Endothelial cell of umbilical vein (primary cell): ENCODE measurements at regions of chr3 and their contacts with region 1.

Region 1: GRCh38 chr3:158297940-158298339 is 188.1 kb downstream of the RSRC1 start:
- DNase-seq: no peak
- H3K4me3 ChIP-seq: no peak overlapping the region
- H3K27ac ChIP-seq: no peak overlapping the region
- H3K4me1 ChIP-seq: no peaks in the 10 kb centered on the region
- H3K27me3 ChIP-seq: no peaks in the 10 kb centered on the region
- CTCF ChIP-seq: no peak
- POLR2A ChIP-seq: no peak

Region 2: DNA sequence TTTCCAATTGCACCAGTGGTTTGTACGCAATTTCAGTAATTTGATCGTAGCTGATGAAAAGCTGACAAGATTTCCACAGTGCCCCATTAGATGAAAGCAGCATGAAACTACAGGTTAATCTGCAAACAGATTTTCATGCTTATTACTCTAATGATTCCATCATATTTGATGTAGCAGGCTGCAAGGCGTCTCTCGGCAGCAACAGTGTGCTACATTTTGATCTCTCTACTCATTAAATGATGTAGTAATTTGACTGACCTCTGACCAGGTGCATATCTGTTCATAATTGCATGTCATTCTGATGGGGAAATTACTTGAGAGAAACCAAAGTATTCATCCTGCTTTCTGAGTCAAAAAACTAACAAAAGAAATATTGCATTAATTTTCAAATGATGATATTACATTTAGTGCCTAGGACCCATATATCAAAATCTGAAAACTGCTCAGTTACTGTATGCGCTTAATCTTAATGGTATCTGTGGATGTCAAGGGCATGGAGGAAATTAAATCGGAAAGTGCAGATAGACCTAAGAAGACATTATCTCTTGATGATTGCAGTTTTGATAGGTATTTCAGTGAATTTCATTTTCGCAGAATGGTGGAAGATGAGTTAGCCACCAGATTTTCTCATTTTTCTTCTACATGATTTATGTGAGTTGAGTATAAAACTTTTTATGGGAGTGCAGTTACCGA is 10.4 kb after region 1 on chr3:
- CTCF ChIA-PET with region 1: interaction called, 13 read pairs
- POLR2A ChIA-PET with region 1: no interaction called
- dilution Hi-C with region 1: no loop called
- intact Hi-C with region 1: no loop called
- DNase-seq: no peak
- H3K4me3 ChIP-seq: no peak overlapping the region
- H3K27ac ChIP-seq: no peak overlapping the region
- H3K4me1 ChIP-seq: no peaks in the 10 kb centered on the region
- H3K27me3 ChIP-seq: no peaks in the 10 kb centered on the region
- CTCF ChIP-seq: no peak
- POLR2A ChIP-seq: no peak

Region 3: DNA sequence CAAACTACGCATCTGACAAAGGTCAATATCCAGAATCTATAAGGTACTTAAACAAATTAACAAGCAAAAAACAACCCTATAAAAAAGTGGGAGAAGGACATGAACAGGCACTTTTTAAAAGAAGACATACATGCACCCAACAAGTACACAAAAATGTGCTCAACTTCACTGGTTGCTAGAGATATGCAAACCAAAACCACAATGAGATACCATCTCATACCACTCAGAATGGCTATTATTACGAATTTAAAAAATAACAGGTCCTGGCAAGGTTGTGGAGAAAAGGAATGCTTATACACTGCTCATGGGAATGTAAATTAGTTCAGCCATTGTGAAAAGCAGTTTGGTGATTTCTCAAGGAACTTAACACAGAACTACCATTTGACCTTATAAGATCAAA is 97.5 kb after region 1 on chr3:
- CTCF ChIA-PET with region 1: no interaction called
- POLR2A ChIA-PET with region 1: no interaction called
- dilution Hi-C with region 1: no loop called
- intact Hi-C with region 1: no loop called
- DNase-seq: no peak
- H3K4me3 ChIP-seq: no peak overlapping the region
- H3K27ac ChIP-seq: no peak overlapping the region
- H3K4me1 ChIP-seq: no peaks in the 10 kb centered on the region
- H3K27me3 ChIP-seq: no peaks in the 10 kb centered on the region
- CTCF ChIP-seq: no peak
- POLR2A ChIP-seq: no peak